Dendritic cell treated with granulocyte-macrophage colony-stimulating factor and Interleukin-4, amounts not matched to agents 40 ng/mL and 50 ng/mL, for 4 days (primary cell): ENCODE measurements at regions of chr1 and their contacts with region 1.

Region 1: DNA sequence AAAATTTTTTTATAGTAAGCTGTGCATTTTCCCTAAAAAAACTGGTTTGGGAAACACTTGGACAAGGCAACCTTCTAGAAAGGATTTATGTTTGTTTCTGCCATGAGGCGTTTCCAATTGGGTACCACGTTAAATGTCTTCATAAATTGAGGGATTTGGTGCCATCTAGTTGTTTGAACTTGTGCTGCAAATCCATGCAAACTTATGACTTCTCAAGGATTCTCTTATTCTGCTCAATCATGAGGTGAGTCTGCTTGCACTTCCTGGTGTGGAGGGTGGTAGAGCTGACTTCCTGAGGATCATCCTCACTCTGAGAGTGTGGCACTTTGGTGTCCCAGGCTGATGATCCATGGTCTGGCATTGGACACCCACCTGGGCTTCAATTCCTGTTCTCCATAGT is 123.3 kb downstream of the PCNX2 start:
- H3K4me3 Mint-ChIP-seq: no peak overlapping the region
- H3K27ac Mint-ChIP-seq: no peak overlapping the region
- H3K4me1 Mint-ChIP-seq: no peaks in the 10 kb centered on the region
- H3K27me3 Mint-ChIP-seq: no peaks in the 10 kb centered on the region

Region 2: GRCh38 chr1:232635778-232636356 is 536.4 kb before region 1 on chr1:
- intact Hi-C with region 1: loop called (anchors 2 kb)
- H3K4me3 Mint-ChIP-seq: no peak overlapping the region
- H3K27ac Mint-ChIP-seq: no peak overlapping the region
- H3K4me1 Mint-ChIP-seq: peaks cover 2% of the 10 kb centered on the region
- H3K27me3 Mint-ChIP-seq: no peaks in the 10 kb centered on the region

Region 3: DNA sequence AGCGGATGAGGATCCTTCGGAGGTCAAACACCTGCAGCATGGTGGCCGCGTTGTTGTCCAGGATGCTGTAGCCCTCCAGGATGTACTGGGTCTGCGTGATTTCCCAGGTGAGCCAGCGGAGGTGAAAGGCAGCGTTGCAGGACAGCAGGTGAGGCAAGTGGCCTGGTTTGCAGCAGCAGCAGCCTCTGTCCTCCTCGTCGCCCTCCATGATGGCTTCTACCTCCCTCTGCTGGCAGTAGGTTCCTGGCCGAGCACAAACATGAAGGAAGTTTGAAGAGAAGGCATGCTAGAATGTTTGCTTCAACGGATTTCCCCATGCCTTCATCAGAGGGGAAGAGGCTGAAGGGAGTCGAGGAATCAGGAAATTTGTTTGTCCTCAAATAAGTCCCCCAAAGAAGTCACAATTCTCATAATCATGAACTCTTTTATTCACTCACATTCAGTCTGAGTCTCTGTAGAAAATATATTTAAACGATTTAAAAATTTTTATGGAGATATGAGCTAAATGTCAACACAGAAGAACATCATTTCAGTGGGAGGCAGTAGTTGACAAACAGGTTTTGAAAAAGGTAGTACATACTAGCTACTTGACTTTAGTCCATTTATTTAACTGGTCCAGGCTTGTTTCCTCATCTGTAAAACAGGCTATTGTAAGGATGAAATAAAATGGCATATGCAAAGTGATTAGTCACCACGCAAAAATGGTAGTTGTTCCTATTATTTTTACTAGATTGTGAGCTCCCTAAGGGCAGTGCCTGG is 146.9 kb before region 1 on chr1:
- intact Hi-C with region 1: loop called (anchors 10 kb)
- H3K4me3 Mint-ChIP-seq: no peak overlapping the region
- H3K27ac Mint-ChIP-seq: no peak overlapping the region
- H3K4me1 Mint-ChIP-seq: peaks cover 19% of the 10 kb centered on the region
- H3K27me3 Mint-ChIP-seq: peaks cover 2% of the 10 kb centered on the region

Region 4: GRCh38 chr1:233379869-233380438 is 207.7 kb after region 1 on chr1:
- intact Hi-C with region 1: no loop called
- H3K4me3 Mint-ChIP-seq: no peak overlapping the region
- H3K27ac Mint-ChIP-seq: no peak overlapping the region
- H3K4me1 Mint-ChIP-seq: peaks cover 18% of the 10 kb centered on the region
- H3K27me3 Mint-ChIP-seq: no peaks in the 10 kb centered on the region